PC-3 (cell line): ENCODE measurements at regions of chr5 and their contacts with region 1.

Region 1: DNA sequence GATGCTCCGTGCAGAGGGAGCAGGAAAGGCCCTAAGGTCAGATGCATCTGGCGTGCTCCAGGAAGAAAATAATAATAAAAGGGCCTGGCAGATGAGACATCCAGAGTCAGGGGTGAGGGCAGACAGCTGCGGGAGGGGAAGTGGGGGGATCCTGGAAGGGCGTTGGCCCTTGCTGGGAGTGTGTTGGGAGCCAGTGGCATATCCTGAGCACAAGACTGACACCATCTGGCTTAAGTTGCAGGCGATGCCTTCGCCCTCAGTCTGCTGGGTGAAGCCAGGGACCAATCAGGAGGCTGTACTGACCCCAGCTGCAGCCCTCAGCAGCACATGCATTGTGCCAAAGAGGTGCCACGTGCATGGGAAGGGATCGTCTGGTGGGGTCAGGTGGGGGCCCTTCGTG is 3.8 kb downstream of the OR2V2 start:
- DNase-seq: peak; percentile 64
- ATAC-seq: peak; percentile 58
- H3K4me3 ChIP-seq: no peak overlapping the region
- H3K27ac ChIP-seq: peak overlapping the region; percentile 95
- H3K4me1 ChIP-seq: peaks cover 55% of the 10 kb centered on the region
- H3K27me3 ChIP-seq: no peaks in the 10 kb centered on the region
- CTCF ChIP-seq: peak; percentile 46; the same call in 1 of the 2 replicates

Region 2: GRCh38 chr5:181043285-181044092 is 107.7 kb before region 1 on chr5:
- CTCF ChIA-PET with region 1: no interaction called
- POLR2A ChIA-PET with region 1: no interaction called
- intact Hi-C with region 1: loop called (anchors 5 kb)
- DNase-seq: peak; percentile 49
- ATAC-seq: peak; percentile 71
- H3K4me3 ChIP-seq: no peak overlapping the region
- H3K27ac ChIP-seq: no peak overlapping the region
- H3K4me1 ChIP-seq: no peaks in the 10 kb centered on the region
- H3K27me3 ChIP-seq: peaks cover 39% of the 10 kb centered on the region
- CTCF ChIP-seq: peak; percentile 59

Region 3: GRCh38 chr5:181120311-181120710 is 30.8 kb before region 1 on chr5:
- CTCF ChIA-PET with region 1: no interaction called
- POLR2A ChIA-PET with region 1: no interaction called
- intact Hi-C with region 1: loop called (anchors 1 kb)
- DNase-seq: peak; percentile 80
- ATAC-seq: peak; percentile 76
- H3K4me3 ChIP-seq: peak overlapping the region; percentile 33; the same call in 1 of the 2 replicates
- H3K27ac ChIP-seq: peak overlapping the region; percentile 76
- H3K4me1 ChIP-seq: peaks cover 41% of the 10 kb centered on the region
- H3K27me3 ChIP-seq: no peaks in the 10 kb centered on the region
- CTCF ChIP-seq: no peak

Region 4: GRCh38 chr5:181133610-181134231 is 17.4 kb before region 1 on chr5:
- CTCF ChIA-PET with region 1: no interaction called
- POLR2A ChIA-PET with region 1: no interaction called
- intact Hi-C with region 1: loop called (anchors 1 kb)
- DNase-seq: peak; percentile 97
- ATAC-seq: peak; percentile 86
- H3K4me3 ChIP-seq: no peak overlapping the region; the same call in 1 of the 2 replicates
- H3K27ac ChIP-seq: peak overlapping the region; percentile 14; the same call in 1 of the 2 replicates
- H3K4me1 ChIP-seq: peaks cover 19% of the 10 kb centered on the region
- H3K27me3 ChIP-seq: no peaks in the 10 kb centered on the region
- CTCF ChIP-seq: no peak